Aorta (tissue), 5 donors: ENCODE measurements at regions of chr12 and their contacts with region 1.

Region 1: DNA sequence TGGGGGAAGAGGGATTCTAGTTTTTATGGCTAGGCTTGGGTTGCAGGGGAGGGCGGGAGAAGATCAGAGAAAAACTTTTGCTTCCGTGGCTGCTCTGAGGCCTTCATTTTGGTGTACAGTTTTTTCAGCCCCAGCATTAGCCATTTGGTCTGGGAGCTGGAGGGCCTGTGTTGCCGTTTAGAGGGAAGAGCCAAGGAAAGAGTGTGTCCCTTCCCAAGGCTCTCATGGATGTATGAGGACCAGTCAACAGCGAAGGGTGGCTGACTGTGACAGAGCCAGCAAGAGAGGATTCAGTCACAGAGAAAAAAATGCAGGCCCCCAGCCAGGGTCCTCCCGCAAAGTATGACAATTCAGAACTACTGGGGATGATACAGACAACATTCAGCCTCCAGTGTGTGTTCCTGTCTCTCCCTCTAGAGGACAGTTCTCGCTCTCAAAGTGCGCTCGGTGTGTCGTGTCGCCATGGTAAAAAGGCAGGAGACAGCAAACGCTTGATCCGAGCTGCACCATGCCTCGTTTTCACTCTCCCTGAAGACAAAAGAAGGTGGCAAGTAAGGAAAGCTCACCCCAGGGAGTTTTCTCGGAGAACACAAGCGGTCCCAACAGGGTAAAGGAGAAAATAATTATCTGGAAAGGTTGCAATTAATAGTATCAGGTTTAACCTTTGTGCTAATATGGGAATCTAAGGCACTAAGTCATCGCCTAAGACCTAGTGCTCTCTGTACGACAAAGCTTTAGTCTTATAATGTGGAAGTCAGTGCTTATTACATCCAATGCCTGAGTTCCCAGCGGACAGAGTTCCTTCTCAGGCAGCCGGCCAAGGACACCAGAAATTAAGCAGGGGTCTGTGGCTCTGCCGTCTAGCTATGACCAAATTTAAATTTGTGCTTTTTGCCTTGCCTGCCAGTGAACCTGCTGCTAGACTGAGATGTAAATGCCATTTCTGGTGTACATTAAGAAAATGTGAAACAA is 157.3 kb upstream of the PLXNC1 start:
- DNase-seq: no peak
- ATAC-seq: peak; percentile 87
- H3K4me3 ChIP-seq: no peak overlapping the region
- H3K27ac ChIP-seq: no peak overlapping the region
- H3K4me1 ChIP-seq: no peaks in the 10 kb centered on the region
- H3K27me3 ChIP-seq: no peaks in the 10 kb centered on the region

Region 2: GRCh38 chr12:93663006-93663728 is 328.0 kb before region 1 on chr12:
- intact Hi-C with region 1: no loop called
- DNase-seq: no peak
- ATAC-seq: no peak
- H3K4me3 ChIP-seq: no peak overlapping the region
- H3K27ac ChIP-seq: no peak overlapping the region
- H3K4me1 ChIP-seq: no peaks in the 10 kb centered on the region
- H3K27me3 ChIP-seq: no peaks in the 10 kb centered on the region

Region 3: GRCh38 chr12:94092516-94093241 is 101.6 kb after region 1 on chr12:
- intact Hi-C with region 1: loop called in 1 of 2 experiments (anchors 5 kb)
- DNase-seq: peak; percentile 79 to 81
- ATAC-seq: peak; percentile 61
- H3K4me3 ChIP-seq: no peak overlapping the region
- H3K27ac ChIP-seq: peak overlapping the region in 1 of 2 donors; percentile 94
- H3K4me1 ChIP-seq: no peaks in the 10 kb centered on the region
- H3K27me3 ChIP-seq: no peaks in the 10 kb centered on the region